Posterior cingulate gyrus (tissue), 11 donors: ENCODE measurements at regions of chr11 and their contacts with region 1.

Region 1: GRCh38 chr11:10450464-10451425 is 4.3 kb upstream of the AMPD3 start:
- DNase-seq: peak in 8 of 10 donors; percentile 22 to 90 (median 38)

Region 2: DNA sequence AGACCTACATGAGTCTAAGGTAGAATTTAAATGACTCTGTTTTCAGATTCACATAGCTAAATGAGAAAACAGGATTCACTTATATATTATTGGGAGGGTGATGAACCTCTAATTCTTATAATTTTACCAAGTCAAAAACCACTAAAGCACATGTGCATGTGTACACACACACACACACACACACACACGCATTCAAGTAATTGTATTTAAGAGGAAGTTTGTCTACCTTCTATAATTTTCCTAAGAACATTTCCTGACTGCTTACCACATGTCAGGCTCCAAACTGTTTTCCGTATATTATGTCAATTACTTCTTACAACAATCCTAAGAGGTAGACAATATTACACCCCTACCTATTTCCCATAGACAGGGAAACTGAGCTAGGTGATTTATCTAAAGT is 83.6 kb after region 1 on chr11:
- intact Hi-C with region 1: loop called (anchors 5 kb)
- DNase-seq: no peak

Region 3: GRCh38 chr11:10725114-10725906 is 274.6 kb after region 1 on chr11:
- intact Hi-C with region 1: no loop called
- DNase-seq: no peak

Region 4: GRCh38 chr11:10906513-10906912 is 455.8 kb after region 1 on chr11:
- intact Hi-C with region 1: no loop called
- DNase-seq: no peak